ENCODE measurements at regions of chr2 and their contacts with region 1.

Region 1: DNA sequence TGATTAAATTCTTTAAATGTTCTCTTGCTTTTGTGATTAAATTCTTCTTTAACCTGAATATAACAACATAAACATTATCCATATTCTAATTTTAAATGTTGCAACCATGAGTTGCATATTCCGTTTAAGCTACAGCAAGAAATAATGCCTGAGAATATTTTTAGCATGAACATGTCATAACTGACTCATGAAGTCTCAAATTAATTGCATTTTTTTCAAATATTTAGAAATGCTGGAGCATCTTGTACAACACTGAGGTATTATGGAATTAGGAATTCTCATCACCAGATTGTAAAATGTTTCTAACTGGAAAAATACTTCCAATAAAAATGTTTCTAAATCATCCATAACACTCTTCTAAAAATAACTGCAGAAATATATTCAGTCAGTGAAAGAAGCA is 14.7 kb downstream of the ROCK2 start:
- DNase-seq: no peak
- ATAC-seq: peak in 1 of 8 donors; percentile 36
- H3K4me3 ChIP-seq: no peak overlapping the region
- H3K27ac ChIP-seq: peak overlapping the region in 3 of 10 donors; percentile 22 to 61 (median 45)
- H3K4me1 ChIP-seq: peaks cover 5 to 75% (median 34%) of the 10 kb centered on the region in 9 donors
- H3K27me3 ChIP-seq: no peaks in the 10 kb centered on the region
- CTCF ChIP-seq: no peak

Region 2: GRCh38 chr2:11292464-11293255 is 37.1 kb before region 1 on chr2:
- intact Hi-C with region 1: loop called in 1 of 10 experiments (anchors 5 kb)
- DNase-seq: peak in 1 of 2 donors; percentile 15
- ATAC-seq: peak; percentile 34 to 90 (median 78)
- H3K4me3 ChIP-seq: no peak overlapping the region
- H3K27ac ChIP-seq: peak overlapping the region in 8 of 10 donors; percentile 9 to 66 (median 40)
- H3K4me1 ChIP-seq: peaks cover 0 to 70% (median 39%) of the 10 kb centered on the region in 9 donors
- H3K27me3 ChIP-seq: no peaks in the 10 kb centered on the region
- CTCF ChIP-seq: no peak